AG04450 (cell line): ENCODE measurements at regions of chr22 and their contacts with region 1.

Region 1: GRCh38 chr22:38766076-38766777 is 10.4 kb upstream of the SUN2 start:
- DNase-seq: no peak
- H3K4me3 ChIP-seq: no peak overlapping the region
- H3K27ac ChIP-seq: no peak overlapping the region
- H3K27me3 ChIP-seq: no peaks in the 10 kb centered on the region
- CTCF ChIP-seq: peak; percentile 92

Region 2: GRCh38 chr22:38755911-38756532 is 10.2 kb before region 1 on chr22 and contains the start of gene SUN2:
- CTCF ChIA-PET with region 1: interaction called, 16 read pairs
- POLR2A ChIA-PET with region 1: no interaction called
- DNase-seq: peak; percentile 34
- H3K4me3 ChIP-seq: peak within 1 kb of the TSS; percentile 71
- H3K27ac ChIP-seq: peak within 1 kb of the TSS; percentile 83
- H3K27me3 ChIP-seq: no peaks in the 10 kb centered on the region
- CTCF ChIP-seq: no peak
- polyA plus RNA-seq, gene SUN2: 24.5 and 33.2 TPM in 2 replicates

Region 3: DNA sequence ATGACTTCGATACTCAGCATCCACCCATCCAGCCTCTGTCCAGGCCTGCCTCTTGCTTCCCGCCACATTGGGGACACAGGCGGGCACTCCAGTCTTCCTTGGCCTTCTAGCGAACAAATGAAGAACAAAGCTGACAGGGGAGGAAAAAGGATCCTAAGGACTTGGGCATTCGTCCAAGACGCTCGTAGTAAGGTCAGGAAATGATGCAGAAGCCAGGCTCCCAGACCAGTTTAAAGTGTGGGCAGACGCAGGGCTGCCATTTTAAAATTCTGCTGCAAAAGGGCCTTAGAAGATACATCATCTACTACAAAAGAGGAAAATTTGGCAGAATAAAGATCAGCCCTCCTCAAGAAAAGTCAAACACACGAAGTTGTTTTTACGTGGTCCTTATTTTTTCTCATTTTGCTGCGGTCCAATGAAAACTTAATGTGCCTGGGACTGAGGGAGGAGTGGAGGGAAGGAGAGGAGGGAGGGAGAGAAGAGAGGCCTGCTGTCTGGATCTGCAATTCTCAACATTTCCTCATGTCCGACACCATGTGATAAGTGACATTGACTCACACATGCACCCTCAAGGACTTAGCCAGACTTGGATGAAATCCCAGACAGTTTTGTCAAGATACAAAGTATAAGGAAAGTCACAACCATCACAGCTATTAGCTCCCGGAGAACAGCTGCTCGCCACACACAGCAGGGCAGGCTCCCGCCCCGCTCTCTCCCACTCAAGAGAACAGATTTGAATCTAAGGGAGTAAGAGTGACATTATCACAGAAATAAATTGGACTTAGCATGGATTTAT is 22.0 kb after region 1 on chr22:
- CTCF ChIA-PET with region 1: interaction called, 15 read pairs
- POLR2A ChIA-PET with region 1: no interaction called
- DNase-seq: peak; percentile 72
- H3K4me3 ChIP-seq: no peak overlapping the region
- H3K27ac ChIP-seq: peak overlapping the region; percentile 61
- H3K27me3 ChIP-seq: no peaks in the 10 kb centered on the region
- CTCF ChIP-seq: no peak

Region 4: GRCh38 chr22:38843201-38843715 is 77.0 kb after region 1 on chr22:
- CTCF ChIA-PET with region 1: interaction called, 38 read pairs
- POLR2A ChIA-PET with region 1: interaction called, 5 read pairs
- DNase-seq: peak; percentile 52
- H3K4me3 ChIP-seq: peak overlapping the region; percentile 43
- H3K27ac ChIP-seq: no peak overlapping the region
- H3K27me3 ChIP-seq: peaks cover 35% of the 10 kb centered on the region
- CTCF ChIP-seq: peak; percentile 38

Region 5: GRCh38 chr22:38862375-38863329 is 96.4 kb after region 1 on chr22:
- CTCF ChIA-PET with region 1: interaction called, 18 read pairs
- POLR2A ChIA-PET with region 1: no interaction called
- DNase-seq: no peak
- H3K4me3 ChIP-seq: no peak overlapping the region
- H3K27ac ChIP-seq: no peak overlapping the region
- H3K27me3 ChIP-seq: no peaks in the 10 kb centered on the region
- CTCF ChIP-seq: no peak

Region 6: GRCh38 chr22:39003165-39003638 is 237.0 kb after region 1 on chr22:
- CTCF ChIA-PET with region 1: interaction called, 80 read pairs
- POLR2A ChIA-PET with region 1: no interaction called
- DNase-seq: peak; percentile 67
- H3K4me3 ChIP-seq: no peak overlapping the region
- H3K27ac ChIP-seq: peak overlapping the region; percentile 21
- H3K27me3 ChIP-seq: peaks cover 4% of the 10 kb centered on the region
- CTCF ChIP-seq: peak; percentile 83